PC-9 (cell line): ENCODE measurements at regions of chr16 and their contacts with region 1.

Region 1: DNA sequence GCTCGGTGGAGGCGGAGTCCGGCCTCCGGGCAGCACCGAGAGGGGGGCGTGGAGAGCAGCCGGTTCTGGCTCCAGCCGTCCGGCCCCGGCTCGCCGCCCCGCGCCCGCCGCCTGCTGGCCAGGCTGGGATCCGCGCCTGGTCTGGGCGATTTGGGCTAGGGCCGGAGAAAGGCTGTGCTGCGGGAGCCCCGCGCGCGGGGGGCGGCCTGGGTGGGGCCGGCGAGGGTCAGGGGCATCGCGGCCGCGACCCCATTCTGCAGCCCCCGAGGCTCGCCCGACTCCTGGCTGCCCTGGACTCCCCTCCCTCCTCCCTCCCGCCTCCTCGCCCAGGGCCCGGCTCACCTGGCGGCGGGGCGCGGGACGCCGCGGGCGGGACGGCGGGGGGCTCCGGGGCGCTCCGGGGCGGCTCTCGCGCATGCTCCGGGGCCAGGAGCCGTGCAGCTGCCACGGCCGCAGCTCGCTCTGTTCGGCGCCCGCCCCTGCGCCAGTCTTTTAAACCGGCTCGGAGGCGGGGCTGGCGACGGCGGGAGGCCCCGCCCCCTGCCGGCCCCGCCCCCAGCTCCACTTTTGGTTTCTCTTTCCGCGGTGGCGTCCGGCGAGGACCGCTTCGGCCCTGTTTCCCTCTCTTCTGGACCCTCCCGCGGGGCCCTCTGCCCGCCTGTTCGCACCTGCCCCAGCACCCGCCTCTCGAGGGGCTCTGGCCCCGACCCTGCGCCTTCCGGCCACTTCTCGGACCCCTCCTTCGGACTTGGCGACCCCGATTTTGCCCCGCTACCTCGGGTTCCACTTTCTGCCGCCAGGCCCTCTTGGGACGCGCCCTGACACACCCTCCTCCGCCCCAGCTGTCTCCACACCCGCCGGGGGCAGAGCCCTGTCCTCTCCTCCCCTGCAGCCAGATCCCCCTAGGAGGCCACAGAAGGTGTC is at the start of gene SOCS1:
- DNase-seq: peak; percentile 63 to 93
- H3K4me3 ChIP-seq: peak within 1 kb of the TSS; percentile 96
- H3K27ac ChIP-seq: peak within 1 kb of the TSS; percentile 69
- H3K4me1 ChIP-seq: peaks cover 23% of the 10 kb centered on the region
- H3K27me3 ChIP-seq: no peaks in the 10 kb centered on the region
- CTCF ChIP-seq: peak; percentile 81
- total RNA-seq, gene SOCS1: 4.6 and 6.7 TPM in 2 replicates

Region 2: DNA sequence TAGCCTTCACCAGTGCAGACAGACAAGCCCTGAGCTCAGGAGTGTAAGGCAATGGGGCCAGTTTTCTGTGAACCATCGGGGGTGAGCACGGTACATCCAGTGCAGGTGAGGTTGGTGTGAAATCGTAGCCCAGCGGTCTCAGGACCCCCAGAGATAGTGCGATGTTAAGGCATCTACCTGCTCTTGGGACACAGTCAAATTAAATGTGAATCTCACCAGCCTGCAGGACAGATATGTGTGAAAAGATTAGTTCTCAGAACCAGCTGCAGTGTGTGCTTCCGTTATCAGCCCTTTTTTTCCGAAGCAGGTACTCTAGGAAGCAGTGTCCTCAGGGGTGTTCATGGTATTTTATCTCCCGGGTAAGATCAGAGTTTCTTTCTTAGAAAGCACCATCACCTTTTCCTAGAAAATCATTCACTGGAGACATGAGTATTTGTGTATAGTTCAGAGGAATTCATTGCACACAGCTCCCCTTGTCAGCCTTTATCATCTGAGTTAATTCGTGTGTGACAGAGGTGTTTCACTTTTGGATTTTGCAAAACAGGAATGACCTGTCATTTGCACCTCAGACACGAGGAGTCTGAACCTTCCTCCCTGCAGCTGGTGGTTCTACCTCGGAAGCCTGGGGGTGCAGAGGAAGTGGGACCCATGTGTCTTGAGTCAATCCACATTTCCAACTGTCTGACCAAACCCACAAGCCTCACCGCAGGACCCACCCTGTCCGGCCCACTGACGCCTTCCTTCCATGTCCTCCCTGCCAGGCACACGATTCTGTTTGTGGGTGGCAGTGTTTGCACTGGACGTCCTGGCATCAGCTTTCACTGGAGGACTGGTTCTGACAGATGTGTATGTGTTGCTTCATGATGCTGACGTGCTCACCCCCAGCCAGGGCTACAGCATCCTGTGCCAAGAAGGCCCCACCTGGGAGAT is 203.9 kb before region 1 on chr16:
- CTCF ChIA-PET with region 1: no interaction called
- POLR2A ChIA-PET with region 1: no interaction called
- intact Hi-C with region 1: loop called (anchors 10 kb)
- DNase-seq: no peak
- H3K4me3 ChIP-seq: no peak overlapping the region
- H3K27ac ChIP-seq: no peak overlapping the region
- H3K4me1 ChIP-seq: peaks cover 13% of the 10 kb centered on the region
- H3K27me3 ChIP-seq: no peaks in the 10 kb centered on the region
- CTCF ChIP-seq: no peak

Region 3: GRCh38 chr16:11175787-11176341 is 80.1 kb before region 1 on chr16:
- CTCF ChIA-PET with region 1: no interaction called
- POLR2A ChIA-PET with region 1: interaction called, 10 read pairs
- intact Hi-C with region 1: no loop called
- DNase-seq: peak in 1 of 2 experiments; percentile 5
- H3K4me3 ChIP-seq: no peak overlapping the region
- H3K27ac ChIP-seq: no peak overlapping the region
- H3K4me1 ChIP-seq: peaks cover 8% of the 10 kb centered on the region
- H3K27me3 ChIP-seq: no peaks in the 10 kb centered on the region
- CTCF ChIP-seq: no peak

Region 4: GRCh38 chr16:11297492-11298142 is 41.6 kb after region 1 on chr16:
- CTCF ChIA-PET with region 1: interaction called, 4 read pairs
- POLR2A ChIA-PET with region 1: interaction called, 3 read pairs
- intact Hi-C with region 1: loop called (anchors 5 kb)
- DNase-seq: peak in 1 of 2 experiments; percentile 77
- H3K4me3 ChIP-seq: no peak overlapping the region
- H3K27ac ChIP-seq: no peak overlapping the region
- H3K4me1 ChIP-seq: peaks cover 6% of the 10 kb centered on the region; the same call in 1 of the 2 replicates
- H3K27me3 ChIP-seq: no peaks in the 10 kb centered on the region
- CTCF ChIP-seq: no peak

Region 5: GRCh38 chr16:11356573-11357331 is 100.8 kb after region 1 on chr16:
- CTCF ChIA-PET with region 1: interaction called, 15 read pairs
- POLR2A ChIA-PET with region 1: interaction called, 9 read pairs
- intact Hi-C with region 1: loop called (anchors 1 kb)
- DNase-seq: peak in 1 of 2 experiments; percentile 48
- H3K4me3 ChIP-seq: 0 out of 2 replicates have a peak overlapping the region, but pooled peaks have one; percentile 20
- H3K27ac ChIP-seq: peak overlapping the region; percentile 81
- H3K4me1 ChIP-seq: peaks cover 44% of the 10 kb centered on the region
- H3K27me3 ChIP-seq: no peaks in the 10 kb centered on the region
- CTCF ChIP-seq: peak; percentile 49; the same call in 1 of the 2 replicates